BJ (cell line): ENCODE measurements at regions of chr19 and their contacts with region 1.

Region 1: GRCh38 chr19:16899566-16900075 is 10.8 kb downstream of the F2RL3 start:
- DNase-seq: no peak
- H3K4me3 ChIP-seq: no peak overlapping the region
- H3K27me3 ChIP-seq: no peaks in the 10 kb centered on the region
- CTCF ChIP-seq: peak; percentile 51

Region 2: DNA sequence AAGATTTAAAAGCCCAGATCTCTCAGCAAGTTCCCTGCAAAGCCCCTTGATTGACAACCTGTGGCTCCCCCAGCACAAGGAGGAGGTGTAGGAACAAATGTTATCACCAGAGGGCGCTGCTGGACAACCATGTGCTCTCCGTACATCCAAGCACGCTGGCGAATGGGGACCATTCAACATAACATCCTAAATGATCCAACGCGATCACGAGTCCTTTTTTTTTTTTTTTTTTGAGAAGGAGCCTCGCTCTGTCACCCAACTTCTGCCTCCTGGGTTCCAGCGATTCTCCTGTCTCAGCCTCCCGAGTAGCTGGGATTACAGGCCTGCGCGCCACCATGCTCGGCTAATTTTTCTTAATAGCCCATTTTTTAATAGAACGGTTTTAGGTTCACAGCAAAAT is 128.0 kb before region 1 on chr19:
- CTCF ChIA-PET with region 1: interaction called, 11 read pairs
- POLR2A ChIA-PET with region 1: no interaction called
- DNase-seq: peak; percentile 10
- H3K4me3 ChIP-seq: no peak overlapping the region
- H3K27me3 ChIP-seq: peaks cover 2% of the 10 kb centered on the region
- CTCF ChIP-seq: peak; percentile 77